B cell (primary cell): ENCODE measurements at regions of chrX and their contacts with region 1.

Region 1: DNA sequence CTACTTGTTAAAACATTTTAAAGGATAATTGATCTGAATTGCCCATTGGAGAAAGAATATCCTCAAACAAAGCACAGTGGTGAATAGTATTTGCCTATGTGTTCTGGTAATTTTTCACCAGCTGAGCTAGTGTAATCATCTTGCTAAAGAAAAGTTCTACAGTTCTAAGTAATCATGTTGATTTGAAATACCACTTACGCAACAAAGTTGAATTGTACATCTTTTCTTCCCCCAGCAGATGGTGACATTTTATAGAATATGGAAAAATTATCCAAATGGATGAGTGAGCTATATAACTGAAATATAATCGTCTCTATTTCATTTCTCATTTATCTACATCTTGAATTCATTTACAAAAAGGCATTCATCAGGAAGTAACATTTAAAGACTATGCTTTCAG is 9.7 kb upstream of the ZNF674 start:
- DNase-seq: no peak
- ATAC-seq: no peak
- H3K4me3 ChIP-seq: no peak overlapping the region
- H3K4me3 Mint-ChIP-seq: no peak overlapping the region
- H3K27ac ChIP-seq: no peak overlapping the region
- H3K27ac Mint-ChIP-seq: no peak overlapping the region
- H3K4me1 ChIP-seq: no peaks in the 10 kb centered on the region
- H3K4me1 Mint-ChIP-seq: no peaks in the 10 kb centered on the region
- H3K27me3 ChIP-seq: no peaks in the 10 kb centered on the region
- H3K27me3 Mint-ChIP-seq: peaks cover 13% of the 10 kb centered on the region
- CTCF ChIP-seq: no peak

Region 2: GRCh38 chrX:46796574-46797191 is 241.7 kb after region 1 on chrX:
- CTCF ChIA-PET with region 1: interaction called, 46 read pairs
- POLR2A ChIA-PET with region 1: no interaction called
- intact Hi-C with region 1: no loop called
- DNase-seq: peak; percentile 77
- ATAC-seq: no peak
- H3K4me3 ChIP-seq: no peak overlapping the region
- H3K4me3 Mint-ChIP-seq: no peak overlapping the region
- H3K27ac ChIP-seq: no peak overlapping the region
- H3K27ac Mint-ChIP-seq: no peak overlapping the region
- H3K4me1 ChIP-seq: peaks cover 0 to 8% of the 10 kb centered on the region in 2 donors
- H3K4me1 Mint-ChIP-seq: peaks cover 15% of the 10 kb centered on the region
- H3K27me3 ChIP-seq: no peaks in the 10 kb centered on the region
- H3K27me3 Mint-ChIP-seq: no peaks in the 10 kb centered on the region
- CTCF ChIP-seq: peak; percentile 73